ENCODE measurements at regions of chr13 and their contacts with region 1.

Region 1: GRCh38 chr13:102845630-102846260 is at the start of gene ERCC5:
- DNase-seq: peak; percentile 99
- ATAC-seq: peak; percentile 74
- H3K4me3 ChIP-seq: peak within 1 kb of the TSS; percentile 91 to 100 (median 99)
- H3K4me3 Mint-ChIP-seq: peak within 1 kb of the TSS; percentile 91
- H3K27ac ChIP-seq: peak within 1 kb of the TSS; percentile 96 to 97
- H3K27ac Mint-ChIP-seq: peak within 1 kb of the TSS; percentile 98
- H3K4me1 ChIP-seq: peaks cover 21 to 25% of the 10 kb centered on the region in 2 donors
- H3K4me1 Mint-ChIP-seq: peaks cover 32% of the 10 kb centered on the region
- H3K27me3 ChIP-seq: no peaks in the 10 kb centered on the region
- H3K27me3 Mint-ChIP-seq: no peaks in the 10 kb centered on the region
- CTCF ChIP-seq: no peak
- total RNA-seq, gene ERCC5: 88.3 and 100 TPM in 2 replicates

Region 2: GRCh38 chr13:102394158-102395053 is 451.3 kb before region 1 on chr13:
- CTCF ChIA-PET with region 1: no interaction called
- POLR2A ChIA-PET with region 1: no interaction called
- intact Hi-C with region 1: loop called (anchors 1 kb)
- DNase-seq: peak; percentile 95
- ATAC-seq: peak; percentile 90
- H3K4me3 ChIP-seq: peak overlapping the region; percentile 41 to 93 (median 73)
- H3K4me3 Mint-ChIP-seq: peak overlapping the region; percentile 91
- H3K27ac ChIP-seq: peak overlapping the region in 1 of 2 donors; percentile 29
- H3K27ac Mint-ChIP-seq: peak overlapping the region; percentile 71
- H3K4me1 ChIP-seq: peaks cover 4 to 13% of the 10 kb centered on the region in 2 donors
- H3K4me1 Mint-ChIP-seq: peaks cover 6% of the 10 kb centered on the region
- H3K27me3 ChIP-seq: peaks cover 0 to 22% (median 4%) of the 10 kb centered on the region in 4 experiments
- H3K27me3 Mint-ChIP-seq: peaks cover 19% of the 10 kb centered on the region
- CTCF ChIP-seq: no peak

Region 3: DNA sequence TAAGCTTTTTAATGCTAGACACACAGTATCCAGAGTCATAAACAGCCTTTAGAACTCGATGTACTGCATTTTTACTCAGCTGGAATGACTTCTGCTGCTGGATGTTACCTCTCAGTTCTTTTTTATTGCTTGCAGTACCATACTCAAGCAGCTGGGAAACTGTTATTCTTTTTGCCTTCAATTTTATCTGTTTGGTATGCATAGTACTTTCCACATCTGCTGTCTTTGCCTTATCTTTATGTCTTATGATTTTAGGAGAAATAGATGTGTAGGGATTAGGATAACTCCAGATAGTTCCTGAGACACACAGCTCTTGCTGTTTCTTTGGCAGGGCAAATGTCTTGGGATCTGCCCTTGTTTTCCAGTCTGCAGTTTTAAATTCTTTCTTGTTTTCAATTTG is 103.6 kb before region 1 on chr13:
- CTCF ChIA-PET with region 1: no interaction called
- POLR2A ChIA-PET with region 1: no interaction called
- intact Hi-C with region 1: no loop called
- DNase-seq: no peak
- ATAC-seq: no peak
- H3K4me3 ChIP-seq: no peak overlapping the region
- H3K4me3 Mint-ChIP-seq: no peak overlapping the region
- H3K27ac ChIP-seq: no peak overlapping the region
- H3K27ac Mint-ChIP-seq: no peak overlapping the region
- H3K4me1 ChIP-seq: no peaks in the 10 kb centered on the region
- H3K4me1 Mint-ChIP-seq: no peaks in the 10 kb centered on the region
- H3K27me3 ChIP-seq: peaks cover 0 to 4% (median 2%) of the 10 kb centered on the region in 4 experiments
- H3K27me3 Mint-ChIP-seq: peaks cover 57% of the 10 kb centered on the region
- CTCF ChIP-seq: no peak

Region 4: DNA sequence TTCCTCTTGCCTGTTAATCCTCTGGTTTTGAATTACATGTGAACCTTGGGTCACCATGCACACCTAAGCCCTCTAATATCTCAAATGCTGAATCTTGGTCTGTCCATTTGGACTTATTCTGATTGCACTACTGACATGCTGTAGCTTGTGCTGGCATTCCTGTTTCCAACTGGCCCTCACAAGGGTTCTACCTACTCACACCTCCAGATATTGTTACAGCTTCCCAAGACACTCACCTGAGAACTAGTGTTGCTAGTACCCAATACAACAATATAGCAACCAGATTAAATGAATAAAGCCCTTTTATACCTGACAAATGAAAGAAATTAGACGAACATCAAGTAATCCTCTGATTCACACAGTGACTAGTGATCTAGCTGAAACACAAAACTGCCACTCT is 88.7 kb before region 1 on chr13:
- CTCF ChIA-PET with region 1: no interaction called
- POLR2A ChIA-PET with region 1: no interaction called
- intact Hi-C with region 1: no loop called
- DNase-seq: no peak
- ATAC-seq: no peak
- H3K4me3 ChIP-seq: no peak overlapping the region
- H3K4me3 Mint-ChIP-seq: no peak overlapping the region
- H3K27ac ChIP-seq: no peak overlapping the region
- H3K27ac Mint-ChIP-seq: no peak overlapping the region
- H3K4me1 ChIP-seq: no peaks in the 10 kb centered on the region
- H3K4me1 Mint-ChIP-seq: no peaks in the 10 kb centered on the region
- H3K27me3 ChIP-seq: no peaks in the 10 kb centered on the region
- H3K27me3 Mint-ChIP-seq: no peaks in the 10 kb centered on the region
- CTCF ChIP-seq: no peak

Region 5: DNA sequence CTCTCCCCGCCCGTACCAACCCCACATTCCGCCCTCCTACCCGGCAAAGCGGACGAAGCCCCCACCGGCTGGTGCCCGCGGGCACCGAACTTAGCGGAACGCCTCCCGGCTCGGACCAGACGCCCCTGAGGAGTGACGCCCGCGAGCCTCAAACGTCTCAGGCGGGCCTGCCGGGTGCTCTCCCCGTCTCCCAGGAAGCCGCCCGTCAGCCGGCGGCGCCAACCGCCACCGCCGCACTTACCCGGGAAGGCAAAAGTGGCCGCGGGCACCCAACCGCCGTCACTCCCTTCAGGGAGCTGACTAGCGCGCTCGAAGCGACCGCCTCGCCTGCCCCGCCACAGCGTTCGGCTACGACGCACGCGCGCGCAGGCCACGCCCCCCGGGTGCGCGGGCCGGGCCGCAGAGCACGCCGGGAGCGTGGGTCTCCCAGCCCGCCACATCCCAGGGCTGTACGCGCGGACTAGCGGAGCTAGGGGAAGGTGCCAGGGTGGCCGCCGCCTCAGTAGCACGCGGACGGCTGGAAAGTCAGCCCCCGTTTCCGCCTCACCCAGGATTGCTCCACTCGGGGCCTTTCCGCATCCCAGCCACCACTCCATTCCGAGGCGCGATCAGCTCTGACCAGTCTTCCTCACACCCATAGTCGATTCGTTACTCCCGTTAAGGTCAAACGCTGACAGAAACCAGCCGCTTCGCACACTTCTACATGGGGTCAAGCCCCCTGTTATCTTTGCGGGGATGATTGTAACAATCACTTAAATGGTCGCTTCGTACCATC is 72.1 kb before region 1 on chr13 and contains the start of gene TEX30:
- CTCF ChIA-PET with region 1: interaction called, 8 read pairs
- POLR2A ChIA-PET with region 1: interaction called, 16 read pairs
- intact Hi-C with region 1: loop called (anchors 1 kb)
- DNase-seq: peak; percentile 92
- ATAC-seq: peak; percentile 95
- H3K4me3 ChIP-seq: peak within 1 kb of the TSS; percentile 61 to 96 (median 87)
- H3K4me3 Mint-ChIP-seq: peak within 1 kb of the TSS; percentile 93
- H3K27ac ChIP-seq: peak within 1 kb of the TSS; percentile 71 to 85
- H3K27ac Mint-ChIP-seq: peak within 1 kb of the TSS; percentile 95
- H3K4me1 ChIP-seq: peaks cover 7 to 16% of the 10 kb centered on the region in 2 donors
- H3K4me1 Mint-ChIP-seq: peaks cover 13% of the 10 kb centered on the region
- H3K27me3 ChIP-seq: no peaks in the 10 kb centered on the region
- H3K27me3 Mint-ChIP-seq: no peaks in the 10 kb centered on the region
- CTCF ChIP-seq: no peak
- total RNA-seq, gene TEX30: 5.3 and 5.9 TPM in 2 replicates

Region 6: GRCh38 chr13:102800145-102801041 is 45.4 kb before region 1 on chr13:
- CTCF ChIA-PET with region 1: interaction called, 13 read pairs
- POLR2A ChIA-PET with region 1: interaction called, 16 read pairs
- intact Hi-C with region 1: loop called (anchors 1 kb)
- DNase-seq: peak; percentile 84
- ATAC-seq: peak; percentile 90
- H3K4me3 ChIP-seq: peak overlapping the region; percentile 45 to 68 (median 53)
- H3K4me3 Mint-ChIP-seq: peak overlapping the region; percentile 84
- H3K27ac ChIP-seq: peak overlapping the region in 1 of 2 donors; percentile 49
- H3K27ac Mint-ChIP-seq: peak overlapping the region; percentile 32
- H3K4me1 ChIP-seq: peaks cover 24% of the 10 kb centered on the region in 2 donors
- H3K4me1 Mint-ChIP-seq: peaks cover 28% of the 10 kb centered on the region
- H3K27me3 ChIP-seq: peaks cover 0 to 18% (median 11%) of the 10 kb centered on the region in 4 experiments
- H3K27me3 Mint-ChIP-seq: peaks cover 8% of the 10 kb centered on the region
- CTCF ChIP-seq: peak; percentile 66

Region 7: DNA sequence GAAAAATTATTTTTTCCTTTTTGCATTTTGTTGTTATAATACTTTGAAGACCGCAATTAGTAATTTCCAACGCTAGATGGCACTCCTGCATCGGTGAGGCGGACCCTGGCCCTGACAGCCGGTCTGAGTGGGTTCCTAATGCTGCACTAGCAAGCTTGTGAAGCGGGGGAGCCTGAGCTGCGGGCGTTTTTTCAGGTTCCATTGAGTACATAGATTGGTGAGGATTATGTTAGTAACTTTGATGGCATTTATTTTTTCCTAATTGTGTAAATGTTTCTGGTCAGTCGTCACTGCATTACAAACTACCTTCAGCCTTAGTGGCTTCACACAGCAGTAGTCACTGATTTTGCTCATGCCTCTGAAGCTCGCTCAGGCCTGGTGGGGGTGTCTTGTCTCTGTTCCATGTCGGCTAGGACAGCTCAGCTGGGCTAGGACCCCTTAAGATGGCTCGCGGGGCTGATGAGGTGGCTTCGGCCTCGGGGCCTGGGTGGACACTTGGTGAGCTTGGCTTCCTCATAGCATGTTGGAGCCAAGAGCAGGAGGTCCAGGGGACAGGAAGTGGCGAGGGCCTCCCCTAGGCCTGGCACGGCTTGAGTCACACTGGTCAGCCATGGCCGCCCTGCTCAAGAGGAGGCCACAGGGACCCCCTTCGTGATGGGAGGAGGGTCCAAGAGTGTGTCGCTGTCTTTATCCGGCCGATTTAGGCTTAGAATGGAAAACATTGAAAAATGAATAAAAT is 25.1 kb after region 1 on chr13:
- CTCF ChIA-PET with region 1: interaction called, 11 read pairs
- POLR2A ChIA-PET with region 1: no interaction called
- intact Hi-C with region 1: loop called (anchors 2 kb)
- DNase-seq: peak; percentile 61
- ATAC-seq: peak; percentile 66
- H3K4me3 ChIP-seq: no peak overlapping the region
- H3K4me3 Mint-ChIP-seq: no peak overlapping the region
- H3K27ac ChIP-seq: no peak overlapping the region
- H3K27ac Mint-ChIP-seq: peak overlapping the region; percentile 74
- H3K4me1 ChIP-seq: peaks cover 0 to 4% of the 10 kb centered on the region in 2 donors
- H3K4me1 Mint-ChIP-seq: peaks cover 7% of the 10 kb centered on the region
- H3K27me3 ChIP-seq: no peaks in the 10 kb centered on the region
- H3K27me3 Mint-ChIP-seq: no peaks in the 10 kb centered on the region
- CTCF ChIP-seq: peak; percentile 82